ENCODE measurements at regions of chr11 and their contacts with region 1.

Region 1: DNA sequence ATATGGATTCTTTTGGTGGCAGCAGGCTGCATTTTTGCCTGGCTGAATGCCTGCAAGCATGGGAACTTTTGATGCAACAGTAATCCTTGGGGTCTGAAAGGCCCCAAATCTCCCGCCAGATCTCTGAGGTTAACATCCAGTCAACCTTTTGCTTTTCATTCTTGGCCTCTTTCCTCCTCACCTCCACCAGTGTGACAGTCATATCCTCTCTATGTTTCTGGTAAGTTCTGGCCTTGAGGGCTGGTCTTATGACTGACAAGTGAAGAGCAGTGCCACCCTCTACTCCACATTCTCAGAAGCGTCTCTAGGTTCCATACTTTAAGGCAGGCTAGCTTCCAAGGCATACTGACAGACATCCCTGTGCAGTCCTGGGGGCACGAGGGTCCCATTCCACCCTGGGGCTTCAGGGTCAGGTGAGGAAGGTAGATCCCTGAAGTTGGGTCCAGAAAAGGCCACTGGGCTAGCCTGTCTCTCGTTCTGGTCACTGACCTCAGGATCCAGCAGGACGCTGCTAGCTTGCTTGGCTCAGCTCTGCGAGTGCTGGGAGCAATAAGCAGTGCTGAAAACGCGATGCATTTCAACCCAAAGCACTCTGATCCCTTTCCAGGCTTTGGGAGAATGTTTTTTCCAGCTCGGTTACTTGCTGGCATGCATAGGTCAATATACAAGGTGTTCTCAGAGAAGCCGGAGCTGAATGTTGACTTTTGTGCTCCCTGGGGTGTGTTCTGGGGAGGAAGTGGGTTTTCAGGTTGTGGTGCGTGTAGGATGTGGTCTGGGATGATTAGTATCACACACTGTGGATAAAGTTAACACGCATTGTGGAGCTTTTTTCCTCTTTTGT is 75.2 kb downstream of the PTPRJ start:
- DNase-seq: peak; percentile 91
- ATAC-seq: peak; percentile 84
- H3K4me3 Mint-ChIP-seq: peak overlapping the region; percentile 69
- H3K27ac Mint-ChIP-seq: peak overlapping the region; percentile 94
- H3K4me1 Mint-ChIP-seq: peaks cover 88% of the 10 kb centered on the region
- H3K27me3 Mint-ChIP-seq: no peaks in the 10 kb centered on the region

Region 2: GRCh38 chr11:47932544-47932943 is 123.0 kb before region 1 on chr11:
- CTCF ChIA-PET with region 1: interaction called, 45 read pairs
- POLR2A ChIA-PET with region 1: interaction called, 5 read pairs
- DNase-seq: no peak
- ATAC-seq: no peak
- H3K4me3 Mint-ChIP-seq: no peak overlapping the region
- H3K27ac Mint-ChIP-seq: no peak overlapping the region
- H3K4me1 Mint-ChIP-seq: peaks cover 22% of the 10 kb centered on the region
- H3K27me3 Mint-ChIP-seq: no peaks in the 10 kb centered on the region

Region 3: DNA sequence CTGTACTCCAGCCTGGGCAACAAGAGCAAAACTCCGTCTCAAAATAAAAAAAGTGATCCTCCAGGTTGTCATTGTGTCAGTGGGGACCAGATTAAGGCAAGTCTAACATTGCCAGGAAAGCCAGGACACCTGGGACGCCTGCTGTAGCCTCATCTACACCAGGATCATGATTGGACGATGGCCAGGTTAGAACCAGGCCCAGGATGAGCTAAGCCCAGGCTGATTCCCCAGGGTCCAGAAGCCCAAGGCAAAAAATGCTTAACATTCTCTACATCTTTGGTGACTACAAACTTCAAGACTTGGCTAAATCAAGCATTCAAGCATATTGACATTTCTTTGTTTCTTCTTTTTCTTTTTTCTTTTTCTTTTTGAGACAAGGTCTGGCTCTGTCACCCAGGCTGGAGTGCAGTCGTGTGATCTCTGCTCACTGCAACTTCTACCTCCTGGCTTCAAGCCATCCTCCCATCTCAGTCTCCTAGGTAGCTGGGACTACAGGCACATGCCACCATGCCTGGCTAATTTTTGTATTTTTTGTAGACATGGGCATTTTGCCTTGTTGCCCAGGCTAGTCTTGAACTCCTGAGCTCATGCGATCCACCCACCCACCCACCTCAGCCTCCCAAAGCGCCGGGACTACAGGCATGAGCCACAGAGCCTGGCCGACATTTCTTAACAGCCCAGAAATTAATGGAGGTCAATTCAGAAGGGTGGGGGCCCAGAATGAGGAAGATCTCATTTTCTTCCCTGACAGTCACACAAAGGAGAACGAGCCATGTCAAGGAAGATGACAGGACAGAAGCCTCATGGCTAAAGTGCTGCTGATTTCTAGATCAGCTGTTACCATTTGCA is 87.7 kb before region 1 on chr11:
- CTCF ChIA-PET with region 1: no interaction called
- POLR2A ChIA-PET with region 1: no interaction called
- DNase-seq: no peak
- ATAC-seq: no peak
- H3K4me3 Mint-ChIP-seq: no peak overlapping the region
- H3K27ac Mint-ChIP-seq: no peak overlapping the region
- H3K4me1 Mint-ChIP-seq: peaks cover 2% of the 10 kb centered on the region
- H3K27me3 Mint-ChIP-seq: no peaks in the 10 kb centered on the region

Region 4: GRCh38 chr11:48001438-48002021 is 54.0 kb before region 1 on chr11:
- CTCF ChIA-PET with region 1: interaction called, 34 read pairs
- POLR2A ChIA-PET with region 1: interaction called, 30 read pairs
- DNase-seq: peak; percentile 95
- ATAC-seq: peak; percentile 95
- H3K4me3 Mint-ChIP-seq: peak overlapping the region; percentile 52
- H3K27ac Mint-ChIP-seq: peak overlapping the region; percentile 97
- H3K4me1 Mint-ChIP-seq: peaks cover 91% of the 10 kb centered on the region
- H3K27me3 Mint-ChIP-seq: no peaks in the 10 kb centered on the region

Region 5: GRCh38 chr11:48020092-48020755 is 35.3 kb before region 1 on chr11:
- CTCF ChIA-PET with region 1: interaction called, 15 read pairs
- POLR2A ChIA-PET with region 1: interaction called, 10 read pairs
- DNase-seq: no peak
- ATAC-seq: no peak
- H3K4me3 Mint-ChIP-seq: no peak overlapping the region
- H3K27ac Mint-ChIP-seq: peak overlapping the region; percentile 0
- H3K4me1 Mint-ChIP-seq: peaks cover 73% of the 10 kb centered on the region
- H3K27me3 Mint-ChIP-seq: no peaks in the 10 kb centered on the region

Region 6: GRCh38 chr11:48074425-48075181 is 19.1 kb after region 1 on chr11:
- CTCF ChIA-PET with region 1: interaction called, 10 read pairs
- POLR2A ChIA-PET with region 1: interaction called, 6 read pairs
- DNase-seq: no peak
- ATAC-seq: no peak
- H3K4me3 Mint-ChIP-seq: no peak overlapping the region
- H3K27ac Mint-ChIP-seq: no peak overlapping the region
- H3K4me1 Mint-ChIP-seq: peaks cover 30% of the 10 kb centered on the region
- H3K27me3 Mint-ChIP-seq: no peaks in the 10 kb centered on the region

Region 7: DNA sequence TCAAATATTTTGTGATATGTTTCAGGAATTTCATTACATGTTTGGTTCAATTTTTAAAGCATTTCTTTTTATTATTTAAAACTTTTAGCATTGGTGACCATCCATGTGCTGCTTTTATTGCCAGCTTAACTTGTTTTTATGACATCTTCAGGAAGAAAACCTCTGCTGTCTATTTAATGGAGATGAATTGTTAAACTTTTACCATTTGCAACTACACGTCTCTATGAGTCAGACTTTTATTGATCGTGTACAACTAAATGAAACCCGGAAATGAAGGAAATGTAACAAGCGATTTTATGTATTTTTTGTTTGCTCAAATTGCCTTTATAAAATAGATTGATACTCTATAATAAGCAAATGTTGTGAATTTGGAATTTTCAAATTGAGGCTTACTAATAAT is 37.8 kb after region 1 on chr11:
- CTCF ChIA-PET with region 1: no interaction called
- POLR2A ChIA-PET with region 1: no interaction called
- DNase-seq: no peak
- ATAC-seq: no peak
- H3K4me3 Mint-ChIP-seq: no peak overlapping the region
- H3K27ac Mint-ChIP-seq: no peak overlapping the region
- H3K4me1 Mint-ChIP-seq: peaks cover 58% of the 10 kb centered on the region
- H3K27me3 Mint-ChIP-seq: no peaks in the 10 kb centered on the region